ENCODE measurements at regions of chr19 and their contacts with region 1.

Region 1: GRCh38 chr19:16628183-16628983 is at the start of gene MED26:
- DNase-seq: peak; percentile 91
- H3K4me3 Mint-ChIP-seq: peak within 1 kb of the TSS; percentile 97
- H3K27ac Mint-ChIP-seq: peak within 1 kb of the TSS; percentile 99
- H3K4me1 Mint-ChIP-seq: peaks cover 47% of the 10 kb centered on the region
- H3K27me3 Mint-ChIP-seq: no peaks in the 10 kb centered on the region
- total RNA-seq, gene MED26: 14.0 and 14.9 TPM in 2 replicates

Region 2: GRCh38 chr19:16470911-16471811 is 157.2 kb before region 1 on chr19:
- intact Hi-C with region 1: loop called (anchors 1 kb)
- DNase-seq: peak; percentile 22
- H3K4me3 Mint-ChIP-seq: peak overlapping the region; percentile 90
- H3K27ac Mint-ChIP-seq: peak overlapping the region; percentile 72
- H3K4me1 Mint-ChIP-seq: peaks cover 28% of the 10 kb centered on the region
- H3K27me3 Mint-ChIP-seq: no peaks in the 10 kb centered on the region

Region 3: GRCh38 chr19:16572332-16573211 is 55.8 kb before region 1 on chr19 and contains the start of gene SLC35E1:
- intact Hi-C with region 1: loop called (anchors 1 kb)
- DNase-seq: peak; percentile 91
- H3K4me3 Mint-ChIP-seq: peak within 1 kb of the TSS; percentile 98
- H3K27ac Mint-ChIP-seq: peak within 1 kb of the TSS; percentile 97
- H3K4me1 Mint-ChIP-seq: peaks cover 58% of the 10 kb centered on the region
- H3K27me3 Mint-ChIP-seq: no peaks in the 10 kb centered on the region
- total RNA-seq, gene SLC35E1: 60.4 and 61.7 TPM in 2 replicates

Region 4: GRCh38 chr19:16608290-16608739 is 20.1 kb before region 1 on chr19:
- intact Hi-C with region 1: loop called (anchors 2 kb)
- DNase-seq: no peak
- H3K4me3 Mint-ChIP-seq: no peak overlapping the region
- H3K27ac Mint-ChIP-seq: peak overlapping the region; percentile 34
- H3K4me1 Mint-ChIP-seq: peaks cover 54% of the 10 kb centered on the region
- H3K27me3 Mint-ChIP-seq: no peaks in the 10 kb centered on the region

Region 5: GRCh38 chr19:16897154-16897855 is 268.9 kb after region 1 on chr19:
- intact Hi-C with region 1: loop called (anchors 5 kb)
- DNase-seq: peak; percentile 55
- H3K4me3 Mint-ChIP-seq: peak overlapping the region; percentile 73
- H3K27ac Mint-ChIP-seq: peak overlapping the region; percentile 55
- H3K4me1 Mint-ChIP-seq: peaks cover 17% of the 10 kb centered on the region
- H3K27me3 Mint-ChIP-seq: peaks cover 22% of the 10 kb centered on the region

Measured in activated T-helper 1 cell treated with anti-CD3 and anti-CD28 coated beads, Interleukin-12 subunit alpha, Interleukin-12 subunit beta, Interleukin-2, Interleukin-4 antibody, amounts not matched to agents 30 ng/mL and 10 ng/mL and 1 ng/mL, durations not matched to agents 14 hours and 24 hours and 36 hours (primary cell).